WTC11 (cell line): ENCODE measurements at regions of chr15 and their contacts with region 1.

Region 1: GRCh38 chr15:53962332-53963241 is 15.7 kb upstream of the UNC13C start:
- DNase-seq: peak; percentile 56
- ATAC-seq: peak; percentile 65
- H3K4me3 Mint-ChIP-seq: no peak overlapping the region
- H3K27ac Mint-ChIP-seq: no peak overlapping the region
- H3K4me1 Mint-ChIP-seq: peaks cover 11% of the 10 kb centered on the region
- H3K27me3 Mint-ChIP-seq: no peaks in the 10 kb centered on the region
- CTCF ChIP-seq: peak; percentile 30; the same call in 1 of the 2 replicates

Region 2: DNA sequence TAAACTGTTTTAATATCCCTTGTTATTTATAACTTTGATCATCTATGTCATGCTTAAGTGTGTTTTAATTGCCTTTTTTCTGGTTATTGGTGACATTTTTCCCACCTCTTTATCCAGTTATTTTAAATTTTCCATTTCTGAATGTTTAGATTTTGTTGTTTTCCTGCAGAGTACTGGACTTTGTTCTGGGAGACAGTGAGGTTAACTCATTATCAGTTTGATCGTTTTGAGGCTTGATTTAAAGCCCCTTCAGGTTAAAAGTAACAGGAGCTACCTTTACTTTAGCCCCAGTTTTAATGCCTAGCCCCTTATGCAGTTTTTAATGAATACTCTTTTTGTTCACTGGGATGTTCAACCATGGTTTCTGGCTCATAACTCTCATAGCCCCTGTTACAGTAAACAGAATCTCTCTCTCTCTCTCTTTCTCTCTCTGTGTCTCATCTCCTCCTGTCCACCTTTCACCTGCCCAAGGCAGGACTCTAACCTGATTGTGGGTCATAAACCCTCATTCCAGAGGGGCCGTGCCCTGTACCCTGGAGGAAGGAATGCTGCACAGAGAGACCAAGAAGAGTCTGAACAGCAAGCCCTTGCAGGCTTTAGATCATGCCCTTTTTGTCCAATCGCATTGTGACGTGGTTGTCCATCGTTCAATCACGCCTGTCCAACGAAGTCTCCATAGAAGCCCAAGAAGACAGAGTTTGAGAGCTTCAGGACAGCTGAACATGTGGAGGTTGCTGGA is 111.3 kb before region 1 on chr15:
- CTCF ChIA-PET with region 1: no interaction called
- POLR2A ChIA-PET with region 1: no interaction called
- DNase-seq: no peak
- ATAC-seq: no peak
- H3K4me3 Mint-ChIP-seq: no peak overlapping the region
- H3K27ac Mint-ChIP-seq: no peak overlapping the region
- H3K4me1 Mint-ChIP-seq: no peaks in the 10 kb centered on the region
- H3K27me3 Mint-ChIP-seq: no peaks in the 10 kb centered on the region
- CTCF ChIP-seq: no peak

Region 3: GRCh38 chr15:53886614-53887013 is 76.0 kb before region 1 on chr15:
- CTCF ChIA-PET with region 1: interaction called, 11 read pairs
- POLR2A ChIA-PET with region 1: no interaction called
- DNase-seq: no peak
- ATAC-seq: no peak
- H3K4me3 Mint-ChIP-seq: no peak overlapping the region
- H3K27ac Mint-ChIP-seq: no peak overlapping the region
- H3K4me1 Mint-ChIP-seq: peaks cover 5% of the 10 kb centered on the region
- H3K27me3 Mint-ChIP-seq: no peaks in the 10 kb centered on the region
- CTCF ChIP-seq: no peak

Region 4: DNA sequence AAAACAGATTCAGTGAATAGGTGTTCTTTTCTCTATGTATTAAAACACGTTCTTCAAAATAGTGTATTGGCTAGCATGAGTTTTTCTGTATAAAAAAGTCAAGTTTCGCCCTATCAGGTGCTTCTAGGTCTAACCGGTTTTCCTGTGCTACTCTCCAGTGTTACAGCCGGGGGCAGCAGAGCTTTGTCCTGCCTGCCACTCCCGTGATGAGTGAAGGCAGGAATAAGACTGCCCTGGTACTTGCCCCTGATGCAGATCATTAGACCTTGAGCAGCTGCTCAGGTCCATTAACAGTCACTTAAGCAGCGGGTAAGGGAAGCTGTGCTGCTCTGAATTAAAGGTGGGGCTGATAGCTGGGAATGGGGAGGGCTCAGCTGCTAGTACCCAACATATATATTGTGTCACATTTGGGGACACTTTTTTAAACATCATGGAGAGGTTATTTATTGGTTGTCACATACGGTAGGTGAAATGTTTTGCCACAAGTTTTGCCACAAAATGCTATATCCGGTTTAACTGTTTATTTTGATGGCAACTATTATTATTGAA is 14.3 kb after region 1 on chr15:
- CTCF ChIA-PET with region 1: interaction called, 10 read pairs
- POLR2A ChIA-PET with region 1: no interaction called
- DNase-seq: peak; percentile 62
- ATAC-seq: peak; percentile 84
- H3K4me3 Mint-ChIP-seq: no peak overlapping the region; the same call in 1 of the 2 replicates
- H3K27ac Mint-ChIP-seq: no peak overlapping the region
- H3K4me1 Mint-ChIP-seq: peaks cover 20% of the 10 kb centered on the region
- H3K27me3 Mint-ChIP-seq: peaks cover 27% of the 10 kb centered on the region
- CTCF ChIP-seq: no peak